Panc1 (cell line): ENCODE measurements at regions of chr6 and their contacts with region 1.

Region 1: DNA sequence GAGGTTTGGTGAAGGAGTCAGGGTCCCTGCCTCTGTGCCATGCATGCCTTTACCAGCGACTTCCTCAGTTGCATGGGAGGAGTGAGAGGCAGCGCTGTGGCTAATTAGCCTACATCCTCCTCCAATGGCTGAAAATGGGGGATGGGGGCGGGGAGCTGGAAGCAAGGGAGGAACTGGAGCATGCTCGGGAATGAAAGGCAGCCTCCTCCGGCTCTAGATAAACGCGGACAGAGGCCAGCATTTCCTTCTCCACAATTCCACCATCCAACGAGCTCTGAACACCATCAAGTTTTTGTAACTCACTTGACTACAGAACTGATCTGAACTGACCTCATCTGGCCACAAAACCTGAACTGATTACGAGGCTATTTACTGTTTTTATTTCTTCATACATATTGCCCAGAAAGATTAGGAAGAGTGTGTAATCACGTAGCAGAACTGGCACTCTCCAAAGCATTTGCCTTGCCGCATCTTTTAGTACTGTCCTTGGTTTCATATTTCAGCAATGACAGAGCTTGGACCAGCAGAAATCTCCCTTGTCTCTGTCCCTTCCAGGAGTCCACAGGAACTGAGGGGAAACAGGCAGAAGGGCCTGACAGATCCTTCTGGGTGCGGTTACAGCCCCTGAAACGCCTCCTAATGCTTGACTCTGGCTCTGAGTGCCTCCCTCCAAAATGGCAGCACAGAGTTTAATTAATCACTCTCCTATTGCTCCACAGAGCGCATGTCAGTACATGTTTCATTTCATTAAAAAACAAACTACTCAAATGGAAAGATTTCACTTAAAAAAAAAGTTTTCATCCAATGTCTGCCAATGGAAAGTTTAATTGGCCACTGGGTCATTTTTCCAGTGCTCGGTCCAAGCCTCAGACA is 58.2 kb upstream of the TRAF3IP2 start:
- DNase-seq: no peak
- ATAC-seq: no peak
- H3K4me3 ChIP-seq: no peak overlapping the region
- H3K27ac ChIP-seq: no peak overlapping the region
- H3K4me1 ChIP-seq: peaks cover 14% of the 10 kb centered on the region
- H3K27me3 ChIP-seq: no peaks in the 10 kb centered on the region
- CTCF ChIP-seq: no peak

Region 2: GRCh38 chr6:111427341-111428116 is 236.4 kb before region 1 on chr6:
- CTCF ChIA-PET with region 1: no interaction called
- POLR2A ChIA-PET with region 1: no interaction called
- in situ Hi-C with region 1: no loop called
- intact Hi-C with region 1: no loop called
- DNase-seq: peak; percentile 68
- ATAC-seq: peak; percentile 83
- H3K4me3 ChIP-seq: no peak overlapping the region
- H3K27ac ChIP-seq: peak overlapping the region; percentile 44
- H3K4me1 ChIP-seq: peaks cover 33% of the 10 kb centered on the region
- H3K27me3 ChIP-seq: no peaks in the 10 kb centered on the region
- CTCF ChIP-seq: no peak

Region 3: DNA sequence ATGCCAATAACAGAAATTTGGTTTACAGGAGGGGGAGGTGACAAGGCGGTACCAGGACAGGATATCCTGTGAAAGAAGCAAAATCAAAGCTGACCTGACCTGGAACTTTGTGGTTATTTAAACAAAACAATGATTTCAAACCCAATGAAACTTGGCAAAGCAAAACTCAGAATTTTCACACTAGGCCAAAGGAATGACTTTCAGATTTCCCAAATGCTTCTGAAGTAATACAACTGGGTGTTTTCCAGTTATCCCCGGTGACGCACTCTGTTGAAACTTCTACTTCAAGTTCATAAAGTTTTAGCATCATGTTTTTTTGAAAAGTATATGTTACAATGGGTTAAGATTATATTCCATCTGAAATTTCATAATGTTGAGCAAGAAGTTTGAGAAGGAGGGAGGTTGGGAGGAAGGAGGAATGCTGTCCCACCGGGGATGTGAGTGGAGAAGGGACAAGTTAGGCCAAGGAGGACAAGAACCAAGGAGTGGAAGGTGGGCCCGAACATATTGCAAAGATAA is 19.9 kb after region 1 on chr6:
- CTCF ChIA-PET with region 1: no interaction called
- POLR2A ChIA-PET with region 1: no interaction called
- in situ Hi-C with region 1: no loop called
- intact Hi-C with region 1: no loop called
- DNase-seq: no peak
- ATAC-seq: no peak
- H3K4me3 ChIP-seq: no peak overlapping the region
- H3K27ac ChIP-seq: no peak overlapping the region
- H3K4me1 ChIP-seq: peaks cover 5% of the 10 kb centered on the region; the same call in 1 of the 2 replicates
- H3K27me3 ChIP-seq: peaks cover 4% of the 10 kb centered on the region
- CTCF ChIP-seq: no peak

Region 4: GRCh38 chr6:111725446-111726112 is 61.7 kb after region 1 on chr6:
- CTCF ChIA-PET with region 1: interaction called, 14 read pairs
- POLR2A ChIA-PET with region 1: no interaction called
- in situ Hi-C with region 1: no loop called
- intact Hi-C with region 1: no loop called
- DNase-seq: no peak
- ATAC-seq: no peak
- H3K4me3 ChIP-seq: no peak overlapping the region
- H3K27ac ChIP-seq: no peak overlapping the region
- H3K4me1 ChIP-seq: no peaks in the 10 kb centered on the region
- H3K27me3 ChIP-seq: peaks cover 25% of the 10 kb centered on the region
- CTCF ChIP-seq: no peak